ENCODE measurements at regions of chr9 and their contacts with region 1.

Region 1: DNA sequence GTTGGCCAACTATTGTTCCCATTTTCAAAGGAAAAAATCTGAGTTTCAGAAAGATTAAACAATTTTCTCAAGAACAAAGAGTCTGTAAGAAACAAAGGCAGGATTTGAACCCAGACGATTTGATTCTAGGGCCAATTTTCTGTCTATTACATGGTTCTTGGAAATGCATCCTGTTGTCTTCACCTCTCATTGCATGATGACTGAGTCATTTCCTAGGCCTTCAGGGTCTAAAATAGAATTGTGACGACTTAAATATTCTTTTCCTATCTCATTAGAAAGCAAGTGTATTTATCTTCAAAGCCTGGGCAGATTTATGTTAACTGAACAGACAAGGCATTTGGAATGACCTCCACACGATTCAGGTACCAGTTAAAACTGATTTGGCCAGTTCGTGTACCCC is 512.9 kb downstream of the NTRK2 start:
- DNase-seq: no peak
- ATAC-seq: no peak
- H3K4me3 ChIP-seq: no peak overlapping the region
- H3K4me3 Mint-ChIP-seq: no peak overlapping the region
- H3K27ac ChIP-seq: no peak overlapping the region
- H3K27ac Mint-ChIP-seq: no peak overlapping the region
- H3K4me1 ChIP-seq: no peaks in the 10 kb centered on the region
- H3K4me1 Mint-ChIP-seq: no peaks in the 10 kb centered on the region
- H3K27me3 ChIP-seq: peaks cover 0 to 2% of the 10 kb centered on the region in 2 experiments
- H3K27me3 Mint-ChIP-seq: peaks cover 11% of the 10 kb centered on the region
- CTCF ChIP-seq: no peak

Region 2: DNA sequence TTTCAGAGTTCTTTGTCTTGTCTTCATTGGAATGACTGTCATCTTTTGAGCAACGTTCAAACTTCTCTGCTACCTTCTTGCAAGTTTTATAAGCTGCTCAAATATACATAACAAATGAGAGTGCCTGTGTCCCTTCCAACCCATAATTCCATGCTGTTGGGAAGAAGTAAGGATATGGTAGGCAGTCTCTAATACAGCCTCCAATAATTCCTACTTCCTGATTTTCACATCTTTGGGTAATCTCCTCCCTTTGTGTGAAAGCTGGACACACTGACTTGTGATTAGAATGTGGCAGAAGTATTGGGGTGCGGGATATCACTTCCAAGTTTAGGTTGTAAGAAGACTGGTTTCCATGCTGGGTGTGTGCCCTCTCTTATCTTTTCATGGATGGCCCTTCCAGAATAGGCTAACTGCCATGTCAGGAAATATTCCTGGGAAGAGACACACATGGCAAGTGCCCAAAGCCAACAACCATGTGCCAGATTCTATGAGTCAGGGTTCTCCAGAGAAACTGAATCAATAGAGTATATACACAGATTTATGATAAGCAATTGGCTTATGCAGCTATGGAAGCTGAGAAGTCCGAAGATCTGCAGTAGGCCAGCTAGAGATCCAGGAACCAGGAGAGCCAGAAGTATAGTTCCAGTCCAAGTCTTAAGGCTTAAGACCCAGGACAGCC is 18.5 kb after region 1 on chr9:
- CTCF ChIA-PET with region 1: no interaction called
- POLR2A ChIA-PET with region 1: no interaction called
- intact Hi-C with region 1: loop called in 1 of 2 experiments (anchors 1 kb)
- DNase-seq: no peak
- ATAC-seq: no peak
- H3K4me3 ChIP-seq: no peak overlapping the region
- H3K4me3 Mint-ChIP-seq: no peak overlapping the region
- H3K27ac ChIP-seq: no peak overlapping the region
- H3K27ac Mint-ChIP-seq: no peak overlapping the region
- H3K4me1 ChIP-seq: no peaks in the 10 kb centered on the region
- H3K4me1 Mint-ChIP-seq: no peaks in the 10 kb centered on the region
- H3K27me3 ChIP-seq: no peaks in the 10 kb centered on the region
- H3K27me3 Mint-ChIP-seq: peaks cover 2% of the 10 kb centered on the region
- CTCF ChIP-seq: no peak

Measured in CD8-positive, alpha-beta T cell (primary cell).